ENCODE measurements at regions of chr19 and their contacts with region 1.

Region 1: DNA sequence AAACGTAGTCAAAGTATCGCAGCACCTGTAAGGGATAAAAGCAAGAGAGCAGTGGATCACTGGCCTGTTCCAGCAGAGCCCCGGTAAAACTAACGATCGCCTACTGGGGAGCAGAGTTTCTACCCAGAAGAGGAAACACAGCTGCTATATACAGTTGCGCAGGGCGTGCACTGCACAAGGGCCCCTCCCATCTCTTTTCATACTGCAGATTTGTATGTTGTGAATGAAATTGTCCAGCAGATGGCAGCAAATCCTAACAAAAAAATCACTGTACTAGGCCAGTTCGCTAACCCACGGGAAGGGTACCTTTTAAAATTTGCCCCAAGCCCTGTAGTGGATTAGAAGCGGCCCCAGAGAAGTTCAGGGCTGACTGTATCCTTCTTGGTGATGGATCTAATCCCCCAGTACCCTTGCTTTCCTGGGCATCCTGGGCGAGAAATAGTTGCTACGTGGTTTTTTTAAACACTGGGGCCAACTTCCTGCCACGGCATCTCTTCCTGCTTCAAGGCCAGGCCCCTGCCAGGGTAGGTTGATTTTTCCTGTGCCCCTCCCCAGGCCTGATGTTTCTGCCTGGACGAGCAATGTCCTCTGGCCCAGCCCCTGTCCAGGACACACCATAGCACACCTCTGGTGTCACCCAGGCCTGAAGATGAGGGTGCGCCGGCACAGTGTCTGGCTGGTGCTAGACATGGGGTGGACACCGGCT is 127.0 kb downstream of the IER2 start:
- DNase-seq: peak; percentile 72
- H3K4me3 Mint-ChIP-seq: no peak overlapping the region
- H3K27ac Mint-ChIP-seq: peak overlapping the region; percentile 71
- H3K4me1 Mint-ChIP-seq: peaks cover 16% of the 10 kb centered on the region
- H3K27me3 Mint-ChIP-seq: peaks cover 4% of the 10 kb centered on the region

Region 2: GRCh38 chr19:13588957-13589833 is 311.9 kb after region 1 on chr19:
- intact Hi-C with region 1: loop called (anchors 1 kb)
- DNase-seq: peak; percentile 70
- H3K4me3 Mint-ChIP-seq: no peak overlapping the region
- H3K27ac Mint-ChIP-seq: no peak overlapping the region
- H3K4me1 Mint-ChIP-seq: no peaks in the 10 kb centered on the region
- H3K27me3 Mint-ChIP-seq: peaks cover 4% of the 10 kb centered on the region

Region 3: DNA sequence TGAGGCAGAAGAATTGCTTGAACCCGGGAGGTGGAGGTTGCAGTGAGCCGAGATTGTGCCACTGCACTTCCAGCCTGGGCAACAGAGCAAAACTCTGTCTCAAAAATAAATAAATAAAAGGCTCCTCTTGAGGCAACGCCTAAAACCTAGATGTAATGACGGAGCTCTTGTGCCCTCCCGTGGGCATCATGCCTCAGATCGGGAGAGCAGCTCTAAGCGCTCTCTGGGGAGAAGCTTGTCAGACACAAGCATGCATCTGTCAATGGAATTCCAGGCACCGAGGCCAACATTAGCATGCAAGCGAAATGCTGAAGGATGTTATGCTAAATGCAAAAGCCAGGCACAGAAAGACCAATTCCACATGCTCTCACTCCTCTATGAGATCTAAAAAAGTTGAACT is 441.5 kb after region 1 on chr19:
- intact Hi-C with region 1: loop called (anchors 1 kb)
- DNase-seq: no peak
- H3K4me3 Mint-ChIP-seq: no peak overlapping the region
- H3K27ac Mint-ChIP-seq: no peak overlapping the region
- H3K4me1 Mint-ChIP-seq: no peaks in the 10 kb centered on the region
- H3K27me3 Mint-ChIP-seq: peaks cover 13% of the 10 kb centered on the region

Region 4: DNA sequence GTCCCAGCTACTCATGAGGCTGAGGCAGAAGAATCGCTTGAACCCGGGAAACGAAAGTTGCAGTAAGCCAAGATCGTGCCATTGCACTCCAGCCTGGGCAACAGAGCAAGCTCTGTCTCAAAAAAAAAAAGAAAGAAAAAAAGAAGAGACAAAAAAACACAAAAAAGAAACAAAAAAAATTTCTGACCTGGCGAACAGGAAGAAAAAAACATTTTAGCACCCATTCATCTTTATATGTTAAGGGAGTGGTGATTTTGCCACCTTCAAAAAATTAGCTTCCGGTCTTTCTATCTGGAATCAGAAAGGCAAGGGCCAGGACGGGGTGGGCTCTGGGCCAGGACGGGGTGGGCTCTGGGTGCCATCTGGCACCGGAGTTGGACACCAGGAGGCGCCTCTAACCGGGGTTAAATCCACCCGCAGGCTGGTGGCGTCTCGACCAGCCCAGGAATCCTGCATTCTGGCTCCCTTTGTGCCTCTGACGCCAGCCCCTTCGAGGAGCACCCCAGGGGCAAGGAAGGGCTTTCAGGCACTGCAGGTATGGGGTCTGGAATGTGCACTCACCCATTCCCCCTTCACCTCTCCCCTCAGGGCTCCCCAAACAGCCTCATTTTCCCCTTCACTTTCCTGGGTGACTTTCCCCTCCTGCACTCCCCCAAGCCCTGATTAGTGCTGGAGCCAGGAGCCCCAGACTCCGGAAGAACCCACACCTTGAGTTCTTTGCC is 507.6 kb after region 1 on chr19:
- intact Hi-C with region 1: loop called (anchors 5 kb)
- DNase-seq: peak; percentile 45
- H3K4me3 Mint-ChIP-seq: peak overlapping the region; percentile 15
- H3K27ac Mint-ChIP-seq: peak overlapping the region; percentile 55
- H3K4me1 Mint-ChIP-seq: peaks cover 31% of the 10 kb centered on the region
- H3K27me3 Mint-ChIP-seq: no peaks in the 10 kb centered on the region